Activated B cell treated with CpG ODN at 0.5 μM for 24 hours (primary cell): ENCODE measurements at regions of chr4 and their contacts with region 1.

Region 1: DNA sequence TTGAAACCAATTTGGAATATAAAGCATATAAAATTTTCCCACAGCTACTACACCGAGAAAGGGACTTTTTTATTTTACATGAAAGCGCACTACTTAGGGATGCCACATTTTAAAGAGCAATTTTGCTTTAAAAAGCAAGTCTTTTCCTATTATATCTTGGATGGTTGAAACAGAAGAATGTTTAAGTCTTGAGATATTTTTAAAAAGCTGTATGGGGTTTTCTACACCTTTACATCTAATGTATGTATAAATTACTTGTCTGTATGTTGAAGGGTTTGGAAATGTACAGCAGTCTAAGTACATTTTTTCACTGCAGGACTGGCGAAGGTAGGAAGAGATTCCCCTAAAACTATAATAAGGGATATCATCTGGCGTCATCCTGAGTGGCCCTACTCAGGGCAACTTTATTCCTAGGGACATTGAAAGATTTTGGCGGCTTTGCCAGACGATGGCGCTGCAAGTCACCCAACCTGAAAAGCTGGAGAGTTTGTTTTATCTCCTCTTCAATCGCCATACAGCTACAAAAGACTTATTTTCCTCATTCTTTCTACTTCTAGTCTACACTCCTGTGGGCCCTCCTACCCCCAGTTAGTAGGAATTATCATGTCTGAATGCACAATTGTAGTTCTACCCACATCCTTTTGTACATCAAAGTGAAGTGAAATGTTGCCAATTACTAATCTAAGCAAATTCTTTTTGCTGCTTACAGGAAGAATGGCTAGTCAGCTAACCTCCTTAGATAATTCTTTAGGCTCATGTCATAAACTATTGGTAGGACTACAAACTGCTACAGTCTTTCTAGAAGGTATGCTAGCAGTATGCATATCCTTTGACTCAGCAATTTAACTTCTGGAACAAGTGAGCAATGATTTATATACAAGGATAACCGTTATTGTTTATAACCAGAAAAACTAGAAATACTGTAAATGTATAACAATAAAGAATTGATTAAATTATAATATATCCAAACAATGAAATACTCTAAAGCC is 782 bp upstream of the NEK1 start:
- DNase-seq: peak; percentile 52
- ATAC-seq: peak; percentile 22
- H3K4me3 Mint-ChIP-seq: peak overlapping the region; percentile 99
- H3K27ac Mint-ChIP-seq: peak overlapping the region; percentile 99
- H3K4me1 Mint-ChIP-seq: peaks cover 27% of the 10 kb centered on the region
- H3K27me3 Mint-ChIP-seq: no peaks in the 10 kb centered on the region
- CTCF ChIP-seq: no peak

Region 2: DNA sequence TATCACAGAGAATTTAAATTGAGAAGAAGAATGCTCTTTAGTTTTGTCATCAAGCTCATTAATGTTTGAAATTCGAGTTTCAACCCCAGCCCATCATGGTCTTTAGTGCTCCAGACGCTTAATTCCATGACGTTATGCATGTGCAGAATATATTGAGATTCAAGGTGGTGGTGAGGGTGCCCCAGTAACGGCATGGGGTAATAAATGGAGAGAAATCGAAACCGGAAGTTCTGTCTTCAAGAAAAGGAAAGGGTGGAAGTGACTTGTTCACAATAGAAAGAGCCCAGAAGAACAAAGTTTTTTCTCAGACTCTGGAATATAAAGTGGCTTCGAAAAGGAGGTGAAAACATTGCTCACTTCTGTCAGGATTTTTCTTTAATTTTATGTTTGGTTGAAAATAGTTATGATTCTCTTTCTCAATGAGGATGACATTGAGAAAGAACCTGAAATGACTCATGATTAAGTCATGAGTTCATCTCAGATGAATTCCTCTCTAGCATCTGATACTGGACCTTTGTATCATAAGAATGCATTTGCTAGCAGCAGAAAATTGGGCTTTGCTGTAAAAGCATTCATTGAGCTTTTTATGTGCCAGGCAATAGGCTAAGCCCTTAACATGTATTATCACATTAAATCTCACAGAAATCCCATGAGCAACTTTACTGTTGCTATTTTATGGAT is 1132.1 kb before region 1 on chr4:
- CTCF ChIA-PET with region 1: no interaction called
- POLR2A ChIA-PET with region 1: interaction called, 9 read pairs
- intact Hi-C with region 1: loop called (anchors 1 kb)
- DNase-seq: no peak
- ATAC-seq: peak; percentile 53
- H3K4me3 Mint-ChIP-seq: peak overlapping the region; percentile 100
- H3K27ac Mint-ChIP-seq: peak overlapping the region; percentile 99
- H3K4me1 Mint-ChIP-seq: peaks cover 41% of the 10 kb centered on the region
- H3K27me3 Mint-ChIP-seq: peaks cover 3% of the 10 kb centered on the region
- CTCF ChIP-seq: no peak

Region 3: GRCh38 chr4:169210504-169211118 is 402.6 kb before region 1 on chr4:
- CTCF ChIA-PET with region 1: no interaction called
- POLR2A ChIA-PET with region 1: no interaction called
- intact Hi-C with region 1: loop called (anchors 2 kb)
- DNase-seq: no peak
- ATAC-seq: peak; percentile 88
- H3K4me3 Mint-ChIP-seq: peak overlapping the region; percentile 67
- H3K27ac Mint-ChIP-seq: peak overlapping the region; percentile 89
- H3K4me1 Mint-ChIP-seq: peaks cover 53% of the 10 kb centered on the region
- H3K27me3 Mint-ChIP-seq: no peaks in the 10 kb centered on the region
- CTCF ChIP-seq: no peak

Region 4: GRCh38 chr4:169716677-169717076 is 103.5 kb after region 1 on chr4:
- CTCF ChIA-PET with region 1: interaction called, 4 read pairs
- POLR2A ChIA-PET with region 1: no interaction called
- intact Hi-C with region 1: loop called (anchors 5 kb)
- DNase-seq: no peak
- ATAC-seq: no peak
- H3K4me3 Mint-ChIP-seq: no peak overlapping the region
- H3K27ac Mint-ChIP-seq: no peak overlapping the region
- H3K4me1 Mint-ChIP-seq: no peaks in the 10 kb centered on the region
- H3K27me3 Mint-ChIP-seq: no peaks in the 10 kb centered on the region
- CTCF ChIP-seq: no peak

Region 5: DNA sequence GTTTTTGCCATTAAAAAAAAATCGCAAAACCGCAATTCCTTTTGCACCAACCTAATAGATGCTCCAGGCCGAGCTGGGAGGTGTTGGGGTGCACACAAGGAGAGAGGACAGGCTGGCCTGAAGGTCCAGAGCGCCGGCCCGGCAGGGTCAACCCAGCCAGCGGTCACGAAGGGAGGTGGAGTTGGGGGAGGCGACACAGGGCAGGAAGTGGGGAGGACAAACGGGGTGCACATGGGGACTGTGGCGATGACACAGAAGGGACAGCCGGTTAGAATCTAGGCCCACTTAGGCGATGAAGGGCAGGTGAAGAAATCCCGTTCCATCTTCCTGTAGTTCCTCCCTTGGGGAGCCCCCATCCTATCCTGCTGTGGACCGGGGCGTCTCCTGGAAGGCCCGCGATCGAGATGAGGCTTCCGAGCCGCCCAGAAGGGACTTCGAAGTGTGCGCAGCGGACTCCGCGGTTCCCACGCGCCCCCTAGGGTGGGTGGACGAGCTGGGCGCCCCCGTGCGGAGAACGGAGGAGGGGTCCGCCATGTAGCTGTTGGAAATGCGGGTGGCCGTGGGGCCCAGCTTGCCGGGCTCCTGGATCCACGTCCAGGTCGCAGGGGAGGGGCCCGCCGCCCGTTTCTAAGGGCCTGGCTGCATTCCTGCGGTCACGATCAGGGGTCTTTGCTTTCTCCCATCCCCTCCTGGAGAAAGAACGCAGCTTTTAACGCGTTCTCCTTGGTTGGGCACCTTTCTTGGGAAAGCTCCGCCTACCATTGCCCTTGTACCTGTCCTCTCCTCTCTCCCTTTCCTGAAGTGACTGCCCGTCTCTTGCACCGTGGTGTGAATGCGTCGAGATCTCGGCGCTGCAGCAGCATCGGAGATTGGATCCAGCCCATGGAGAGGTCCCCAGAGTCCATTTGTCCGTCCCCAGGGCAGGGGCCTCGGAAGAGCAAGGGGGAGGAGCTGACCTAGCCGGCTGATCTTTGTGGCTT is 161.6 kb after region 1 on chr4:
- CTCF ChIA-PET with region 1: interaction called, 13 read pairs
- POLR2A ChIA-PET with region 1: no interaction called
- intact Hi-C with region 1: loop called (anchors 1 kb)
- DNase-seq: peak; percentile 22
- ATAC-seq: peak; percentile 49
- H3K4me3 Mint-ChIP-seq: peak overlapping the region; percentile 47
- H3K27ac Mint-ChIP-seq: no peak overlapping the region
- H3K4me1 Mint-ChIP-seq: peaks cover 8% of the 10 kb centered on the region
- H3K27me3 Mint-ChIP-seq: peaks cover 26% of the 10 kb centered on the region
- CTCF ChIP-seq: no peak

Region 6: GRCh38 chr4:170027181-170027829 is 414.1 kb after region 1 on chr4:
- CTCF ChIA-PET with region 1: interaction called, 3 read pairs
- POLR2A ChIA-PET with region 1: interaction called, 5 read pairs
- intact Hi-C with region 1: loop called (anchors 1 kb)
- DNase-seq: peak; percentile 86
- ATAC-seq: peak; percentile 76
- H3K4me3 Mint-ChIP-seq: peak overlapping the region; percentile 89
- H3K27ac Mint-ChIP-seq: peak overlapping the region; percentile 47
- H3K4me1 Mint-ChIP-seq: peaks cover 13% of the 10 kb centered on the region
- H3K27me3 Mint-ChIP-seq: peaks cover 21% of the 10 kb centered on the region
- CTCF ChIP-seq: no peak